ENCODE measurements at regions of chr2 and their contacts with region 1.

Region 1: DNA sequence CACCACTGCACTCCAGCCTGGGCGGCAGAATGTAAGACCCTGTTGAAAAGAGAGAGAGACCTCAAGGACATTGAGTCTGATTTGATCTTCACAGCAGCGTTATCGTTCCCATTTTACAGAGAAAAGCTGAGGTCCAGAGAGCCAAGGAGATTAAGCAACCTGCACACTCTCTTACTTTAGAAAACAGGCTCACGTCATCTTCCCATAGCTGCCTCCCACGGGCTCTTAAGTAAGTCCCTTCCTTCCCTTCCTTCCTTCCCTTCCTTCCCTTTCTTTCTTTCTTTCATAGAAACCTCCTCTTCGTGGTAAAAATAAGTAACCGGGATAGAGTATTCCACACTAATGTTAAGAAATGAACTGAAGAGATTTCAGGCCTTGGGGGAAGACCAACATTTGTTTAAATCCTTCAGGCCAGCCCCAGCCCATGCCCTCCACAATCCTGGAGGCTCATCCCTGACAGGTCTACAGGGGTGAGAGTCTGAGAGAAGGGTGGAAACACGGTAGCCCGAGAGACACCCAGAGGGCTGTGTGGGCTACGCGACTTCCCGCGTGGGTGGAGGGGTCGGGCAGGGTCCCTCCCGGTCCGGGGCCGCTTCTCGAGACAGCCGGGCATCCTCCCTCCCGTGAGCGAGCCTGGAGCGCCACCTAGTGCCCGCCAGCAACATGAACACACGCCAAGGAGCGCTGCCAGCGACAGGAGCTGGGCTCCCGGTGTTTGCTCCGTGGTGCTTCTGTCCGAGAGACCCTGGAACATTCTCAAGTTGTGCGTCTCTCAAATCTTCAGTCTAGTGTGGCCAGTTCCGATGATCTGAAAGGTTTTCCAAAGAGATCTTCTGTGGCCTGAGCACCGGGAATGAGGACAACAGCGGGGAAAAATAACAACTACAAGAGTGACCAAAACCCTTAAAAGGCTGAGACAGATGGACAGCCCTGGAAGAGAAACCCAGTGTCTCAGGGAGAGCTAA is 160.3 kb downstream of the INO80D start:
- DNase-seq: peak; percentile 81 to 90 (median 87)
- H3K4me3 ChIP-seq: peak overlapping the region; percentile 23
- H3K27ac ChIP-seq: no peak overlapping the region
- H3K4me1 ChIP-seq: peaks cover 2% of the 10 kb centered on the region
- H3K27me3 ChIP-seq: no peaks in the 10 kb centered on the region
- CTCF ChIP-seq: peak; percentile 78 to 93 (median 93)
- EP300 ChIP-seq: no peak
- POLR2A ChIP-seq: no peak

Region 2: GRCh38 chr2:204260162-204260877 is 1665.3 kb before region 1 on chr2:
- intact Hi-C with region 1: loop called in 1 of 4 experiments (anchors 10 kb)
- DNase-seq: peak; percentile 33 to 76 (median 56)
- H3K4me3 ChIP-seq: no peak overlapping the region
- H3K27ac ChIP-seq: no peak overlapping the region
- H3K4me1 ChIP-seq: peaks cover 4% of the 10 kb centered on the region
- H3K27me3 ChIP-seq: no peaks in the 10 kb centered on the region
- CTCF ChIP-seq: peak; percentile 46 to 75 (median 70)
- EP300 ChIP-seq: no peak
- POLR2A ChIP-seq: no peak

Region 3: DNA sequence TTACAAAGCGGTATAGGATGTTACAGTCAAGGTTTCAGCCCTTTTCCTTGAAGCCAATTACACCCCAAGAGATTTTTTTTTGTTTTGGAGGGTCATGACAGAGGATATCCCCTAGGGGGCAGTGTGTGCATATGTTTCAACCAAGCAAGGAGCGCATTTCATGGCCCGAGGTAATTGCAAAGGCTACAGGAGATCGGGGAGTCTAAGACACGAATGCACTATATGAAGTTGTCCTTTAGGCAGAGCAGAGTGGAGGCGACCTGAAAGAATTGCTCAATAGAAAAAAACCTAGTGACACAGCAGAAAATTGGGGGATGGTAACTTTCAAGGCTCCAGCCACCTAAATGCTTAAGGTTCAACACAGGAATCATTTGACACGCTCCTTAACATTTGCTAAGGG is 1600.2 kb before region 1 on chr2:
- intact Hi-C with region 1: loop called in 2 of 4 experiments (anchors 10 kb)
- DNase-seq: peak in 4 of 5 donors; percentile 52 to 72 (median 58)
- H3K4me3 ChIP-seq: no peak overlapping the region
- H3K27ac ChIP-seq: no peak overlapping the region
- H3K4me1 ChIP-seq: no peaks in the 10 kb centered on the region
- H3K27me3 ChIP-seq: no peaks in the 10 kb centered on the region
- CTCF ChIP-seq: peak; percentile 65 to 83 (median 73)
- EP300 ChIP-seq: no peak
- POLR2A ChIP-seq: no peak

Region 4: DNA sequence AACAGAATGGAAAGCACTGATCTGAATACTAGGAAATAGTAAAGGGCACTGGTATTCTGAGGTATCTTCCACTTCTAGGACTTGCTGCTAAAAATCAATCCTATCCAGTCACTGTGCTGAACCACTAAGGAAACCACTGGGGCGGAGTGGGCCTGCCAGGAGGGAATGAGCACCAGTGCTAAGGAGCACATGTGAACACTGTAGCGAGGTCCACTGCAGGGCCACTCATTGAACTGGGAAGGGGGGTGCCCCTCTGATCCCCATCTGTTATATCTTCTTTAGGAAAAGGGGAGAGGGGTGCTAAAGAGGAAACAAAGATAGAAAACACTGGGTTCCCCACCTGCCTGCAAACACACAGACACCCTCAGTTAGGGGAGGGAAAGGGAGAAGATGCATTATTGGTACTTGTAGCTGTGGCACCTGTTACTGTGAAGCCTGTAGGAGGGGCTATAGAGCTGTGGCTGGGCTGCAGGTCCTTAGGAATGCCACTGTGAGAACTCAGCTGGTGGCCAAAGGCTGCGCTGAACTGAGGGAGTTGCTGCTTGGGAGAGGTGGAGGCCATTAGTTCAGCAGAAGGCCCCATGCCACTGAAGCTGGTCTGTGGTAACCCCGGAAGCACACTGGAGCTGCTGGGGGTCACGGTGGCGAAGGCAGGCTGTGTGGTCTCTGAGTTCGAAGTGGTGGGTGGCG is 78.5 kb after region 1 on chr2:
- intact Hi-C with region 1: loop called in 1 of 4 experiments (anchors 2 kb)
- DNase-seq: no peak
- H3K4me3 ChIP-seq: no peak overlapping the region
- H3K27ac ChIP-seq: no peak overlapping the region
- H3K4me1 ChIP-seq: no peaks in the 10 kb centered on the region
- H3K27me3 ChIP-seq: no peaks in the 10 kb centered on the region
- CTCF ChIP-seq: no peak
- EP300 ChIP-seq: no peak
- POLR2A ChIP-seq: no peak

Region 5: GRCh38 chr2:207283356-207283755 is 1357.7 kb after region 1 on chr2:
- intact Hi-C with region 1: no loop called
- DNase-seq: no peak
- H3K4me3 ChIP-seq: no peak overlapping the region
- H3K27ac ChIP-seq: no peak overlapping the region
- H3K4me1 ChIP-seq: no peaks in the 10 kb centered on the region
- H3K27me3 ChIP-seq: no peaks in the 10 kb centered on the region
- CTCF ChIP-seq: no peak
- EP300 ChIP-seq: no peak
- POLR2A ChIP-seq: no peak